Activated naive CD4-positive, alpha-beta T cell treated with anti-CD3 and anti-CD28 coated beads for 36 hours (primary cell): ENCODE measurements at regions of chr10 and their contacts with region 1.

Region 1: GRCh38 chr10:68901104-68901927 is at the start of gene DDX50:
- DNase-seq: peak; percentile 99
- H3K4me3 Mint-ChIP-seq: peak within 1 kb of the TSS; percentile 93
- H3K27ac Mint-ChIP-seq: peak within 1 kb of the TSS; percentile 97
- H3K4me1 Mint-ChIP-seq: peaks cover 40% of the 10 kb centered on the region
- H3K27me3 Mint-ChIP-seq: no peaks in the 10 kb centered on the region
- total RNA-seq, gene DDX50: 62.1 to 66.0 TPM

Region 2: DNA sequence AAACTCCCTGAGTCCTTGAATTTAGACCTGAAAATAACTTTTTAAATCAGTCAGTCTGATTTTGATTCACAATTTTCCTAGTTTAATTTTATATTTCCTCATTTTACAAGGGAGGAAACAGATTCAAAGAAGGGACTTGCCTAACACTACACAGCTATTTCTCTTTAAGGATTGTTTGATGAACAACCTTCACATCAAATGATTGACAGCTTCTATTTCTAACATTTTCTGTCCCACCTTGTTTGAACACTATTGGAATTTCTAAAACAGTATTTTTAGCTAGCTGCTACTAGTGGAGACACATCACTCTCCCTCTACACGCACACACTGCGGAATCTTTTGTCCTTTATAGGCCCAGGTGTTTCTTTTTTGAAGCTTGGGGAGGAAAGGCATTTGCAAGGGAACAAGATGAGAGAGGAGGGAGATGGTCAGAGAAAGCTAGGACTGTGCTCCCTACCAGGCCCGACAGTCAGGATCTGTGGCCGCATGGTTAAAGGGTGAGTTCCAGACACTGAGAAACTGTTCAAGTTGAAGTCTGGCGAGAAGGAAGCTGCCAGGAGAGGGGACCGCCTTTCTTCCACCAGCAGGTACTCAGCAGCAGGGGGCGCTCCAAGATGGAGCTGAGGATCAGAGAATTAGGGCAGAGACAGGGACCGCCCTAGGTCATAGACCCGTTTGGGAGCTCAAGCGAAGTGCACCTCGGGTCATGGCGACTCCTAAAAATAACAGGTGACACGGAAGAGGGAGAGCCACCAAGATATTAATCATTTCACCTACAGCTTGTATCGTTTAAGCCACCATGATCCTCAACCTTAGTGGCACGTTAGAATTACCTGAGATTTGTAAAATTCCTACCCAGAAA is 1113.1 kb before region 1 on chr10:
- CTCF ChIA-PET with region 1: no interaction called
- intact Hi-C with region 1: loop called (anchors 2 kb)
- DNase-seq: peak; percentile 92
- H3K4me3 Mint-ChIP-seq: no peak overlapping the region
- H3K27ac Mint-ChIP-seq: peak overlapping the region; percentile 57
- H3K4me1 Mint-ChIP-seq: peaks cover 43% of the 10 kb centered on the region
- H3K27me3 Mint-ChIP-seq: peaks cover 2% of the 10 kb centered on the region

Region 3: GRCh38 chr10:68163735-68164134 is 737.6 kb before region 1 on chr10:
- CTCF ChIA-PET with region 1: no interaction called
- intact Hi-C with region 1: loop called (anchors 5 kb)
- DNase-seq: no peak
- H3K4me3 Mint-ChIP-seq: no peak overlapping the region
- H3K27ac Mint-ChIP-seq: no peak overlapping the region
- H3K4me1 Mint-ChIP-seq: peaks cover 5% of the 10 kb centered on the region
- H3K27me3 Mint-ChIP-seq: no peaks in the 10 kb centered on the region

Region 4: GRCh38 chr10:68471586-68472408 is 429.5 kb before region 1 on chr10 and contains the start of gene DNA2:
- CTCF ChIA-PET with region 1: no interaction called
- intact Hi-C with region 1: loop called (anchors 2 kb)
- DNase-seq: peak; percentile 81
- H3K4me3 Mint-ChIP-seq: peak within 1 kb of the TSS; percentile 96
- H3K27ac Mint-ChIP-seq: peak within 1 kb of the TSS; percentile 90
- H3K4me1 Mint-ChIP-seq: peaks cover 20% of the 10 kb centered on the region
- H3K27me3 Mint-ChIP-seq: no peaks in the 10 kb centered on the region
- total RNA-seq, gene DNA2: 50.2 to 51.4 TPM

Region 5: GRCh38 chr10:68720793-68721672 is 180.3 kb before region 1 on chr10 and contains the start of gene CCAR1:
- CTCF ChIA-PET with region 1: no interaction called
- intact Hi-C with region 1: loop called (anchors 1 kb)
- DNase-seq: peak; percentile 98
- H3K4me3 Mint-ChIP-seq: peak within 1 kb of the TSS; percentile 96
- H3K27ac Mint-ChIP-seq: peak within 1 kb of the TSS; percentile 96
- H3K4me1 Mint-ChIP-seq: peaks cover 16% of the 10 kb centered on the region
- H3K27me3 Mint-ChIP-seq: no peaks in the 10 kb centered on the region
- total RNA-seq, gene CCAR1: 80.7 to 87.9 TPM

Region 6: GRCh38 chr10:68955832-68956532 is 54.7 kb after region 1 on chr10 and contains the start of gene DDX21:
- CTCF ChIA-PET with region 1: no interaction called
- intact Hi-C with region 1: loop called (anchors 1 kb)
- DNase-seq: peak; percentile 94
- H3K4me3 Mint-ChIP-seq: peak within 1 kb of the TSS; percentile 100
- H3K27ac Mint-ChIP-seq: peak within 1 kb of the TSS; percentile 100
- H3K4me1 Mint-ChIP-seq: peaks cover 44% of the 10 kb centered on the region
- H3K27me3 Mint-ChIP-seq: no peaks in the 10 kb centered on the region
- total RNA-seq, gene DDX21: 155 to 164 TPM